Activated B cell treated with CpG ODN at 0.5 μM for 24 hours (primary cell): ENCODE measurements at regions of chr4 and their contacts with region 1.

Region 1: GRCh38 chr4:110193822-110194761 is 4.3 kb downstream of the ELOVL6 start:
- DNase-seq: peak; percentile 31
- ATAC-seq: peak; percentile 79
- H3K4me3 Mint-ChIP-seq: peak overlapping the region; percentile 51
- H3K27ac Mint-ChIP-seq: peak overlapping the region; percentile 62
- H3K4me1 Mint-ChIP-seq: peaks cover 24% of the 10 kb centered on the region
- H3K27me3 Mint-ChIP-seq: no peaks in the 10 kb centered on the region
- CTCF ChIP-seq: no peak

Region 2: DNA sequence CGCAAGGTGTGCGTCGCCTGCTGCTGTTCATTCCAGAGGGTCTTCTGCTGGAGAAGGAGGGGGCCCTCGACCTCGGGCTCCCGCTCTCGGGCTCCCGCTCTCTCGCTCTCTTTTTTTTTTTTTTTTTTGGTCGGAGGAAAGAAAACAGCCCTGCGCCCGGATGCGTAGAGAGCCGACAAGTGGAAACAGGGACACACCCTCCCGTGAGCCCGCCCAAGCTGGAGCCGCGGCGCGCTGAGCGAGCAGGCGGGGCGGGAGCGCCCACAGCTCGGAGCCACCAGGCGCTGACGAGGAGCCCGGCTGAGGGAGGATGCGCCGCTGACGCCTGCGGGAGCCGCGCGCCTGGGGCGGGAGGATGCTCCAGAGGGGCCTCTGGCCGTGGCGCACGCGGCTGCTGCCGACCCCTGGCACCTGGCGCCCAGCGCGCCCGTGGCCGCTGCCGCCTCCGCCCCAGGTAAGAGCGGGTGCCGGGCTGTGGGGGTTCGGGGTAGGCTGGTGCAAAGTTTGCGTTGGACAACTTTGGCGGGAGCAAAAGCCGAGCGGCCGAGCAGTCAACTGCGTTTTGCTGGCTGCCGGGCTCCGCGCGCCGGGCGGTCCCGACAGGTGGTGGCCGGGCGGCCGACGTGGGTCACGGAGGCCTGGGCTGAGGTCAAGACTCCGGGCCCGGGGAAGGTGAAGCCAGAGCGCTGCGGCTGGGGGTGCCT is 634.0 kb before region 1 on chr4 and contains the start of gene MCUB:
- CTCF ChIA-PET with region 1: no interaction called
- POLR2A ChIA-PET with region 1: no interaction called
- intact Hi-C with region 1: loop called (anchors 10 kb)
- DNase-seq: peak; percentile 75
- ATAC-seq: peak; percentile 84
- H3K4me3 Mint-ChIP-seq: peak within 1 kb of the TSS; percentile 93
- H3K27ac Mint-ChIP-seq: peak within 1 kb of the TSS; percentile 97
- H3K4me1 Mint-ChIP-seq: peaks cover 49% of the 10 kb centered on the region
- H3K27me3 Mint-ChIP-seq: no peaks in the 10 kb centered on the region
- CTCF ChIP-seq: no peak
- total RNA-seq, gene MCUB: 28.9 and 34.4 TPM in 2 replicates

Region 3: GRCh38 chr4:109815151-109816081 is 378.7 kb before region 1 on chr4 and contains the start of gene GAR1:
- CTCF ChIA-PET with region 1: no interaction called
- POLR2A ChIA-PET with region 1: no interaction called
- intact Hi-C with region 1: loop called (anchors 5 kb)
- DNase-seq: peak; percentile 70
- ATAC-seq: peak; percentile 97
- H3K4me3 Mint-ChIP-seq: peak within 1 kb of the TSS; percentile 94
- H3K27ac Mint-ChIP-seq: peak within 1 kb of the TSS; percentile 93
- H3K4me1 Mint-ChIP-seq: peaks cover 28% of the 10 kb centered on the region
- H3K27me3 Mint-ChIP-seq: no peaks in the 10 kb centered on the region
- CTCF ChIP-seq: no peak
- total RNA-seq, gene GAR1: 21.0 and 23.1 TPM in 2 replicates

Region 4: GRCh38 chr4:110211007-110211769 is 17.1 kb after region 1 on chr4:
- CTCF ChIA-PET with region 1: no interaction called
- POLR2A ChIA-PET with region 1: no interaction called
- intact Hi-C with region 1: loop called (anchors 1 kb)
- DNase-seq: no peak
- ATAC-seq: peak; percentile 49
- H3K4me3 Mint-ChIP-seq: no peak overlapping the region
- H3K27ac Mint-ChIP-seq: no peak overlapping the region
- H3K4me1 Mint-ChIP-seq: peaks cover 1% of the 10 kb centered on the region
- H3K27me3 Mint-ChIP-seq: peaks cover under 1% of the 10 kb centered on the region
- CTCF ChIP-seq: no peak

Region 5: GRCh38 chr4:110586131-110586850 is 392.2 kb after region 1 on chr4:
- CTCF ChIA-PET with region 1: no interaction called
- POLR2A ChIA-PET with region 1: no interaction called
- intact Hi-C with region 1: no loop called
- DNase-seq: no peak
- ATAC-seq: no peak
- H3K4me3 Mint-ChIP-seq: no peak overlapping the region
- H3K27ac Mint-ChIP-seq: no peak overlapping the region
- H3K4me1 Mint-ChIP-seq: no peaks in the 10 kb centered on the region
- H3K27me3 Mint-ChIP-seq: peaks cover 4% of the 10 kb centered on the region
- CTCF ChIP-seq: no peak

Region 6: DNA sequence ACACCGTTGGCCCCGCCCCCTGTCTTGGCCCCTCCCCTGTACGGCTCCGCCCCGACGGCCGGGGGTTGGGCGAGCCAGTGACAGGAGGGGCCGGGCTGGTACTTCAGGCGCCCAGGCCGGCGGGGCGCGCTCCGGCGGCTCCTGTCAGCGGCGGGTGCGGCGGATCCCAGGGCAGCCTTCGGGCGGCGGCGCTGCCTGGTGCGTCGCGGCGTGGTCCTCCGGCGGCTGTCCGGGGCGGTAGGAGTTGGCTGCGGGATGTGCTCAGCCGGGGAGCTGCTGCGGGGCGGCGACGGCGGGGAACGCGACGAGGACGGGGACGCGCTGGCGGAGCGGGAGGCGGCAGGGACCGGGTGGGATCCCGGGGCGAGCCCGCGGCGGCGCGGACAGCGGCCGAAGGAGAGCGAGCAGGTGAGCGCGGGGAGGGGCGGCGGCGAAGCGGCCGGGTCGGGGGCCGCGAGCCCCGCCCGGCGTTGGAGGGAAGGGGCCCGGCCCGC is 1951.3 kb after region 1 on chr4 and contains the start of gene FAM241A:
- CTCF ChIA-PET with region 1: no interaction called
- POLR2A ChIA-PET with region 1: no interaction called
- intact Hi-C with region 1: loop called (anchors 5 kb)
- DNase-seq: peak; percentile 86
- ATAC-seq: peak; percentile 97
- H3K4me3 Mint-ChIP-seq: peak within 1 kb of the TSS; percentile 97
- H3K27ac Mint-ChIP-seq: peak within 1 kb of the TSS; percentile 80
- H3K4me1 Mint-ChIP-seq: peaks cover 19% of the 10 kb centered on the region
- H3K27me3 Mint-ChIP-seq: peaks cover 5% of the 10 kb centered on the region
- CTCF ChIP-seq: no peak
- total RNA-seq, gene FAM241A: 1.1 and 1.5 TPM in 2 replicates